Left ventricle myocardium inferior (tissue), 1 donor: ENCODE measurements at regions of chr12 and their contacts with region 1.

Region 1: GRCh38 chr12:21697904-21698630 is 40.4 kb upstream of the LDHB start:
- DNase-seq: no peak
- H3K4me3 ChIP-seq: peak overlapping the region; percentile 45
- H3K27ac ChIP-seq: peak overlapping the region; percentile 43
- H3K4me1 ChIP-seq: peaks cover 7% of the 10 kb centered on the region
- H3K27me3 ChIP-seq: no peaks in the 10 kb centered on the region
- CTCF ChIP-seq: peak; percentile 75

Region 2: GRCh38 chr12:21788089-21788983 is 90.3 kb after region 1 on chr12:
- intact Hi-C with region 1: no loop called
- DNase-seq: no peak
- H3K4me3 ChIP-seq: no peak overlapping the region
- H3K27ac ChIP-seq: peak overlapping the region; percentile 5
- H3K4me1 ChIP-seq: peaks cover 22% of the 10 kb centered on the region
- H3K27me3 ChIP-seq: no peaks in the 10 kb centered on the region
- CTCF ChIP-seq: no peak

Region 3: GRCh38 chr12:21989819-21990412 is 291.8 kb after region 1 on chr12:
- intact Hi-C with region 1: loop called (anchors 10 kb)
- DNase-seq: no peak
- H3K4me3 ChIP-seq: no peak overlapping the region
- H3K27ac ChIP-seq: no peak overlapping the region
- H3K4me1 ChIP-seq: no peaks in the 10 kb centered on the region
- H3K27me3 ChIP-seq: no peaks in the 10 kb centered on the region
- CTCF ChIP-seq: peak; percentile 71

Region 4: GRCh38 chr12:22018860-22019259 is 320.8 kb after region 1 on chr12:
- intact Hi-C with region 1: loop called (anchors 2 kb)
- DNase-seq: no peak
- H3K4me3 ChIP-seq: no peak overlapping the region
- H3K27ac ChIP-seq: no peak overlapping the region
- H3K4me1 ChIP-seq: peaks cover 10% of the 10 kb centered on the region
- H3K27me3 ChIP-seq: no peaks in the 10 kb centered on the region
- CTCF ChIP-seq: peak; percentile 67